ENCODE measurements at regions of chr5 and their contacts with region 1.

Region 1: DNA sequence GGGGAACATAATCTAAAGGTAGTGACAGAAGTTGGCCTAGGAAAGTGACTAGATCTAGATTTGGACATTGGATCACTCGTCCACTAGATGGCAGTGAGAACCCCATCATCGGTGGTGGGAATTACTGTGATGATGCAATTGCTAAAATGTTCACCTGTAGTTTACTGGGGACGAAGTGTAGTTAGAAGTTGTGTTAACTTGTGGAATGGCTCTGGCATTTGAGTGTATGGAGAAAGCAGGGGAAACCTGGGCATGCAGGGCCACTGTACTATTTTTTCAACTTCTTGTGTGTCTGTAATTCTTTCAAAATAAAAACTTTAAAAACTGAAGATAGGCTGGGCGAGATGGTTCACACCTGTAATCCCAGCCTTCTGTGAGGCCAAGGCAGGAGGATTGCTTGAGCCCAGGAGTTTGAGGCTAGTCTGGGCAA is 75.5 kb downstream of the PHAX start:
- DNase-seq: peak; percentile 39 to 86 (median 54)
- ATAC-seq: peak; percentile 90
- H3K4me3 ChIP-seq: no peak overlapping the region
- H3K4me3 Mint-ChIP-seq: no peak overlapping the region
- H3K27ac ChIP-seq: no peak overlapping the region
- H3K27ac Mint-ChIP-seq: no peak overlapping the region
- H3K4me1 ChIP-seq: peaks cover 4% of the 10 kb centered on the region
- H3K4me1 Mint-ChIP-seq: peaks cover 5% of the 10 kb centered on the region
- H3K27me3 ChIP-seq: no peaks in the 10 kb centered on the region
- H3K27me3 Mint-ChIP-seq: no peaks in the 10 kb centered on the region
- CTCF ChIP-seq: peak; percentile 82

Region 2: DNA sequence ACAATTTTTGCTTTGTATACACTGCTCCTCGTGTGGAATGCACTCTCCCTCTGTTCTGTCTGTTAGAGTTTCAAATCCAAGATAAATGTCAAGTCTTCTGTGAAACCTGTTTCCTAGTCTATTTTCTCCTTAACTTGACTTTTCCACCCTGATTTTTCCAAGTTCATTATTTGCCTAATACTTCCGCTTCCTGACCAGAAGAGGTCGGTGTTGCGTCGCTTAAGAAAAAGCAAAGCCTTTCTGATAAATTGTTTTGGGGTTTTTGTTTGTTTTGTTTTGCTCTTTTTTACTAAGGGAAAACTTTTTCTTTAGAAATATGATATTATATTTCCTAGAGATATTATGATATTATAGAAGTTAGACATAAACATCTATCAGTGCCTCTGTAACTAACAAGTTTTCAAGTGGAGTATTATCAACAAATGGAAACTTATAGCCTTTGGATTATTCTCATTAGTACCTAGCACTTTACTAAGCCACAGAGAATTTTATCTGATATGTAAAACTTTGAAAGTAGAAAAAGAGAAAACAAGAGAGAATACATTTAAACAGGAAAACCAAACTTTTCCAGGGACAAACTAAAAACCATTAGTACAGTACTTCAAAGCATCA is 19.7 kb before region 1 on chr5:
- CTCF ChIA-PET with region 1: no interaction called
- POLR2A ChIA-PET with region 1: no interaction called
- intact Hi-C with region 1: no loop called
- DNase-seq: peak in 4 of 14 experiments; percentile 40 to 67 (median 56)
- ATAC-seq: no peak
- H3K4me3 ChIP-seq: no peak overlapping the region
- H3K4me3 Mint-ChIP-seq: no peak overlapping the region
- H3K27ac ChIP-seq: no peak overlapping the region
- H3K27ac Mint-ChIP-seq: no peak overlapping the region
- H3K4me1 ChIP-seq: no peaks in the 10 kb centered on the region
- H3K4me1 Mint-ChIP-seq: no peaks in the 10 kb centered on the region
- H3K27me3 ChIP-seq: no peaks in the 10 kb centered on the region
- H3K27me3 Mint-ChIP-seq: no peaks in the 10 kb centered on the region
- CTCF ChIP-seq: peak; percentile 83

Region 3: DNA sequence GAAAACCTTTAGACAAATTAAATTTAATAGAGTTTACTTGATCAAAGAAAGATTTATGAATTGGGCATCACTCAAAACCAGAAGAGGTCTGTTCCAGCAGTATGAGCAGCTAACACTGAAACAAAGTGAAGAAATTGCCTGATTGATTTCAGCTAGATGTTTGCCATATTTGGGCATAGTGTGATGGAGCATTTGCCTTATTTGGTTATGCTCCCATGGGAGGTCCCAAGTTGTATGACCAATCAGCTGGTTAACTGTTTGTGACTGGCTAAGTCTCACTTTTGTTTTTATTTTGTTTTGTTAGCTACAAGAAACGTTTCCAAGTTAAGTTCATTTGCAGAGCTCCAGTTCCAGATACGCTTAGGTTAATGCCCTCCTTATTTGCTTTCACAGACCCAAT is 47.4 kb after region 1 on chr5:
- CTCF ChIA-PET with region 1: no interaction called
- POLR2A ChIA-PET with region 1: no interaction called
- intact Hi-C with region 1: loop called in 1 of 2 experiments (anchors 5 kb)
- DNase-seq: no peak
- ATAC-seq: no peak
- H3K4me3 ChIP-seq: no peak overlapping the region
- H3K4me3 Mint-ChIP-seq: no peak overlapping the region
- H3K27ac ChIP-seq: no peak overlapping the region
- H3K27ac Mint-ChIP-seq: no peak overlapping the region
- H3K4me1 ChIP-seq: no peaks in the 10 kb centered on the region
- H3K4me1 Mint-ChIP-seq: no peaks in the 10 kb centered on the region
- H3K27me3 ChIP-seq: no peaks in the 10 kb centered on the region
- H3K27me3 Mint-ChIP-seq: no peaks in the 10 kb centered on the region
- CTCF ChIP-seq: no peak

Region 4: DNA sequence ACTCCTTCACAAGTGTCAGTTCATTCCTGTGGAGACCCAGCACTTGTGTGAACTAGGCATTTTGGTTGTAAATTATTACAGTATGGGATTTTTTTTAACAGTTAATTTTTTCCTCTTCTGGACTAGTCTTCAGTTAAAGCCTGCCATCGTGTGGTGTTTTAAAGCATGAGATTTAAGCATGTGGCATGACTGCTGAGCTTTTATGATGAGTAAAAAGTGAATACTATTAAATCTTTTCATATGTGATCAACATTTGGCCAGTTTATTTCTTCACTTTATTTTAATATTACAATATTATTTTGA is 125.7 kb after region 1 on chr5:
- CTCF ChIA-PET with region 1: interaction called, 6 read pairs
- POLR2A ChIA-PET with region 1: no interaction called
- intact Hi-C with region 1: loop called (anchors 1 to 5 kb)
- DNase-seq: peak in 4 of 14 experiments; percentile 12 to 59 (median 52)
- ATAC-seq: peak; percentile 48
- H3K4me3 ChIP-seq: no peak overlapping the region
- H3K4me3 Mint-ChIP-seq: no peak overlapping the region
- H3K27ac ChIP-seq: no peak overlapping the region
- H3K27ac Mint-ChIP-seq: no peak overlapping the region
- H3K4me1 ChIP-seq: peaks cover 9% of the 10 kb centered on the region
- H3K4me1 Mint-ChIP-seq: peaks cover 40% of the 10 kb centered on the region
- H3K27me3 ChIP-seq: no peaks in the 10 kb centered on the region
- H3K27me3 Mint-ChIP-seq: no peaks in the 10 kb centered on the region
- CTCF ChIP-seq: no peak

Region 5: DNA sequence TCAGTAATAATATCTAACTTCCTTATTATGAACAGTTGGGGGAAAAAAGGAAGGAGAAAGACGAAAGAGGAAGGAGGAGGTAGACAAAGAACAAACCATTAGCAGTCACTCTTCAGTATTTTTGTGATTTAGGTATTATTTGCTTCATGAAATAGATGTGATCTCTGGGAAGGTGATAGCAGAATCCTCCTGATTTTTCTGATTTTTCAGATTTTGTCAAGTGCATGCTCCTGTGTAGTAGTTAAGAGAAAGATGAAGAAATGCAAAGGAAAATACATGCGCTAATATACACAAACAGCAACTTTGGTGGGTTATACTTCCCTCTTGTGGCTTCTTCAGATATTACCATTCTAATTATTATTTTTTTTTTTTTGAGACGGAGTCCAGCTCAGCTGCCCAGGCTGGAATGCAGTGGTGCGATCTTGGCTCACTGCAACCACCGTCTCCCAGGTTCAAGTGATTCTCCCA is 132.3 kb after region 1 on chr5:
- CTCF ChIA-PET with region 1: interaction called, 3 read pairs
- POLR2A ChIA-PET with region 1: no interaction called
- intact Hi-C with region 1: loop called (anchors 1 to 5 kb)
- DNase-seq: peak in 3 of 14 experiments; percentile 42 to 52 (median 47)
- ATAC-seq: no peak
- H3K4me3 ChIP-seq: no peak overlapping the region
- H3K4me3 Mint-ChIP-seq: no peak overlapping the region
- H3K27ac ChIP-seq: no peak overlapping the region
- H3K27ac Mint-ChIP-seq: no peak overlapping the region
- H3K4me1 ChIP-seq: peaks cover 12% of the 10 kb centered on the region
- H3K4me1 Mint-ChIP-seq: peaks cover 32% of the 10 kb centered on the region
- H3K27me3 ChIP-seq: no peaks in the 10 kb centered on the region
- H3K27me3 Mint-ChIP-seq: no peaks in the 10 kb centered on the region
- CTCF ChIP-seq: peak; percentile 59

Region 6: DNA sequence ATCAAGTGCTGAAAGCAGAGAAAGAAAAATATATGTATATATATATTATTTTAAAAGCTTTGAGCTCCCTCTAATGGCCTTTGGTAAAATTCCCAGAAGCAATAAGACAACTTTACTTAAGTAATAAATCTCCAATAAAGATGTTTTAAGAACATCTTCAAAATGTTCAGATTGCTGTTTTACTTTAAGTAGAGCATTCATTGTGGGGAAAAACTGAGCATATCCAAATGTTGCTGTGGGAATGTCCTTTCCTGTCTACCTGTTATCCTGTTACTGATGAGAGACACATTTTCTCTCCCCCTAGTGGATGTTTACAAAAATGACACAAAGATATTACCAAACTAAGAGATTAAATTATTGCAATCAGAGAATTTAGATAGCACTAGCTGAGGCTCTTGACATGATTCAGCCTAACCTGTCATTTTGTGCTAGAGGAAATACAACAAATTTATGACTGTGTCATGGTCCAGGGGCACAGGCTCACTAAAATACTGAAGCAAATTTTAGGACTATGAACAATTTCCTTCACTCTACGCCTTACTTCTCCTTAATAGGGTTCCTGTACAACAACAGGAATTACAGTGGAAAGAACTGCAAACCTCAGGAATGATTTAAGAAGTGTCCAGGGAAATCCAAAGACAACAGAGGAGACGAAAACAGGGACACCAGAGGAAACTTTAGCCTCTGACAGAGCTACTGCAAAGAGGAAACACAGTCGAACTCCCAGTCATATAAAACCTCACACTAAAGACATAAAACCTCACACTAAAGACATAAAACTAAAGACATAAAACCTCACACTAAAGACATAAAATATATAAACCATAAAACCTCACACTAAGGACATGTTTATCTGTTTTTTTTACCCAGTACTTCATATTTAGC is 816.9 kb after region 1 on chr5:
- CTCF ChIA-PET with region 1: interaction called, 3 read pairs
- POLR2A ChIA-PET with region 1: no interaction called
- intact Hi-C with region 1: loop called in 1 of 2 experiments (anchors 2 kb)
- DNase-seq: peak in 3 of 14 experiments; percentile 35 to 52 (median 52)
- ATAC-seq: peak; percentile 71
- H3K4me3 ChIP-seq: no peak overlapping the region
- H3K4me3 Mint-ChIP-seq: no peak overlapping the region
- H3K27ac ChIP-seq: no peak overlapping the region
- H3K27ac Mint-ChIP-seq: no peak overlapping the region
- H3K4me1 ChIP-seq: no peaks in the 10 kb centered on the region
- H3K4me1 Mint-ChIP-seq: no peaks in the 10 kb centered on the region
- H3K27me3 ChIP-seq: peaks cover 6 to 10% of the 10 kb centered on the region in 2 experiments
- H3K27me3 Mint-ChIP-seq: peaks cover 31% of the 10 kb centered on the region
- CTCF ChIP-seq: peak; percentile 99